Breast epithelium (tissue), 4 donors: ENCODE measurements at regions of chr12 and their contacts with region 1.

Region 1: GRCh38 chr12:121917979-121918678 is at the start of gene CFAP251:
- DNase-seq: peak; percentile 92 to 95
- H3K4me3 ChIP-seq: peak within 1 kb of the TSS; percentile 23 to 67 (median 57)
- H3K27ac ChIP-seq: peak within 1 kb of the TSS; percentile 45 to 64
- H3K4me1 ChIP-seq: peaks cover 0 to 5% of the 10 kb centered on the region in 2 donors
- H3K27me3 ChIP-seq: no peaks in the 10 kb centered on the region
- CTCF ChIP-seq: peak; percentile 58 to 94 (median 66)
- POLR2A ChIP-seq: no peak
- total RNA-seq, gene CFAP251: 4.8 to 8.2 (median 6.7) TPM

Region 2: DNA sequence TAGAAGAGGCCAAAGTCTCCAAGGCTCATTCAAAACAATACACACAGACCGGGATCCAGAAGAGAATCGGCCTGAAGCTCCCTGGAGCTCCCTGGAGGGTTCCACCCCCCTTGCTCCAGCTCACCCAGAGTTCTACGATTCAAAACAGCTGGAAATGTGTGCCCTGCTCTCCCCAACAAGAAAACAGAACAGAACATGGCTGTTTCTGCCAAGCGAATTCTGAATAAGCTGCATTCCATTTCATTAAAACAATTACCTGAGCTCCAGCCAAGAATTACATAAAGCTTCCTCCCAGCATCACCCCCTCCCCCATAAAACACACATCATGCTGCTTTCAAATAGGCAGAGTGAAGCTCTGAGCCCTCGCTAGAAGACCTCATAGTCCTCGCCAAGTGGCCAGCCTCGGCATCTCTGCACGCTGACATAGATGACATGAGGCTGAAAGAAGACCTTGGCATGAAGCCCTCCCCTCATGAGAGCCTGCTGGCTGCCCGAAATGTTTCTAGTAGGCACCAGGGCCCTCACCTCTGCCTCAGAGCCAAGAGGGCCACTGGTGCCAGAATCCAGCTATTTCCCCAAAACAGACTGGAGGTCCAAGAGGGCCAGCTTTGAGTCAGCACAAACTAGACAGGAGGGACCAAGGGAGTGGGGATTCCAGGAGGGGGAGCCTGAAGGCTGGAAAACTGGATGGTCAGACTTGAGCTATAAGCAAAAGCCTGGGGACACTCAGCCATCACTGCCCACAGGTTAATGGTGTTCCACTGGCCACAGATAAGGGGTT is 1660.9 kb before region 1 on chr12:
- intact Hi-C with region 1: loop called (anchors 10 kb)
- DNase-seq: peak in 1 of 2 donors; percentile 80
- H3K4me3 ChIP-seq: peak overlapping the region in 2 of 3 donors; percentile 4 to 52
- H3K27ac ChIP-seq: peak overlapping the region; percentile 94 to 96
- H3K4me1 ChIP-seq: peaks cover 8 to 19% of the 10 kb centered on the region in 2 donors
- H3K27me3 ChIP-seq: no peaks in the 10 kb centered on the region
- CTCF ChIP-seq: peak in 1 of 3 donors; percentile 15
- POLR2A ChIP-seq: no peak

Region 3: DNA sequence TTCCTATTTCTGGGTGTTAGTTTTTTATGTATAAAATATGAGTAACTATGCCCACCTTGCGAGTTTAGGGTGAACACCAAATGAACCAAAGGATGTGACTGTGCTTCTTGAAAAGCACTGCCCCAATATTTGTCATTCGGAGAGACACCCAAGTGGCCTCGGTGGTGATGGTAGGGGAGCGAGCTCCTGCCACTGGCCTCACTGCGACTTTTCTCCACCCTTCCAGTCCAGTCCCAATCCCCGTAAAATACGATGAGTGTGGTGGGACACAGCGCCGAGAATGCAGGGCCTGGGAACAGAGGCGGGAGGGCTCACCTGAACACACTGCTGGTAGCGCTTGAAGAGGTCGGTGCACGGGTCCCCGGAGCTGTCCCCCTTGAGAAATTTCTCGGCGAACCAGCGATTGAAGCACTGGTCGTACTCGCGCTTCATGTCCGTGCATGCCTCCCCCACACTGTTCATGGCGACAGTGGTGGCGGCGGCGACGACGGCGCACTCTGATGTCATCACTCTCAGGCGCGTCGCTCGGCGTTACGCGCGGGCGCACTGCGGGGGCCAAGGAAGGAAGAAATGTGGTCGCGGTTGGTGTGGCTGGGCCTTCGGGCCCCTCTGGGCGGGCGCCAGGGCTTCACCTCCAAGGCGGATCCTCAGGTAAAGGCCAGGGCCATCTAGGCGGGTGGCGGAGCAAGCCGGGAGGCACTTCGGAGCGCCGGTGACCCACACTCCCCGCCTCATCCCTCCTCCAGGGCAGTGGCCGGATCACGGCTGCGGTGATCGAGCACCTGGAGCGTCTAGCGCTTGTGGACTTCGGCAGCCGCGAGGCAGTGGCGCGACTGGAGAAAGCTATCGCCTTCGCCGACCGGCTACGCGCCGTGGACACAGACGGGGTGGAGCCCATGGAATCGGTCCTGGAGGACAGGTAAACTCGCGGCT is 1472.0 kb before region 1 on chr12 and contains the starts of genes GATC and TRIAP1:
- intact Hi-C with region 1: loop called (anchors 5 kb)
- DNase-seq: peak; percentile 74 to 83
- H3K4me3 ChIP-seq: peak within 1 kb of the TSS; percentile 90 to 99 (median 97)
- H3K27ac ChIP-seq: peak within 1 kb of the TSS; percentile 93 to 97
- H3K4me1 ChIP-seq: peaks cover 0 to 15% of the 10 kb centered on the region in 2 donors
- H3K27me3 ChIP-seq: no peaks in the 10 kb centered on the region
- CTCF ChIP-seq: no peak
- POLR2A ChIP-seq: peak; percentile 73
- total RNA-seq, gene GATC: 26.5 to 35.8 (median 32.5) TPM
- total RNA-seq, gene TRIAP1: 10.2 to 21.3 (median 13.0) TPM

Region 4: DNA sequence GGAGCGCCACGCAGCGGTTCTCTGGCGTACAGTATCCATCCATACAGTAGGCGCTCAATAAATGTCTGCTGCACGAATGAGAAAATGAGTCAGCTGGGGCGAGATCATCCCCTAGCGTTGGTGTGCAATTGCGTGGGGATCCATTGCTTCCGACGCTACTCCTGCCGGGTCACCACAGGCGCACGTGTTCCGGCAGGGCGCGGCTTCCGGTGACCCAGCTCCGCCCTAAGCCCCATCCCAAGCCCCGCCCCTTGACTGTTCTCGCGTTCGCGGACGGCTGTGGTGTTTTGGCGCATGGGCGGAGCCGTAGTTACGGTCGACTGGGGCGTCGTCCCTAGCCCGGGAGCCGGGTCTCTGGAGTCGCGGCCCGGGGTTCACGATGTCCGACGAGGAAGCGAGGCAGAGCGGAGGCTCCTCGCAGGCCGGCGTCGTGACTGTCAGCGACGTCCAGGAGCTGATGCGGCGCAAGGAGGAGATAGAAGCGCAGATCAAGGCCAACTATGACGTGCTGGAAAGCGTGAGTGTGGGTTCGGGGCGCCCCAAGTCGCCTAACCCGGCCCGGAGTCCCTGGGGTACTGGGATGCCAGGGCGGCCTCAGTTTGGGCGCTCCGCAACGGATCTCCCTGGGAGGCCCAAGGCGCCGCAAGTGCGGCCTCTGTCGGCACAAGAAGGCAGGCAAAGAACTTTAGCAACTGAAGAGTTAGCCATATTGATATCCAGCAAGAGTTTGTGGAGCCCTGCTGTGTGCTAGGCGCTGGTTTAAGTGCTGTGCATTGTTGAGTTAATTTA is 29.5 kb before region 1 on chr12 and contains the start of gene PSMD9:
- intact Hi-C with region 1: no loop called
- DNase-seq: peak; percentile 95 to 98
- H3K4me3 ChIP-seq: peak within 1 kb of the TSS; percentile 69 to 90 (median 86)
- H3K27ac ChIP-seq: peak within 1 kb of the TSS; percentile 88 to 94
- H3K4me1 ChIP-seq: peaks cover 0 to 13% of the 10 kb centered on the region in 2 donors
- H3K27me3 ChIP-seq: no peaks in the 10 kb centered on the region
- CTCF ChIP-seq: peak; percentile 22 to 62 (median 59)
- POLR2A ChIP-seq: peak; percentile 25
- total RNA-seq, gene PSMD9: 34.7 to 65.3 (median 37.9) TPM

Region 5: GRCh38 chr12:122421821-122422729 is 503.9 kb after region 1 on chr12 and contains the start of gene CLIP1:
- intact Hi-C with region 1: no loop called
- DNase-seq: peak; percentile 54 to 57
- H3K4me3 ChIP-seq: peak within 1 kb of the TSS; percentile 92 to 98 (median 98)
- H3K27ac ChIP-seq: peak within 1 kb of the TSS; percentile 100
- H3K4me1 ChIP-seq: peaks cover 0 to 12% of the 10 kb centered on the region in 2 donors
- H3K27me3 ChIP-seq: no peaks in the 10 kb centered on the region
- CTCF ChIP-seq: no peak
- POLR2A ChIP-seq: no peak
- total RNA-seq, gene CLIP1: 86.9 to 126 (median 108) TPM

Region 6: DNA sequence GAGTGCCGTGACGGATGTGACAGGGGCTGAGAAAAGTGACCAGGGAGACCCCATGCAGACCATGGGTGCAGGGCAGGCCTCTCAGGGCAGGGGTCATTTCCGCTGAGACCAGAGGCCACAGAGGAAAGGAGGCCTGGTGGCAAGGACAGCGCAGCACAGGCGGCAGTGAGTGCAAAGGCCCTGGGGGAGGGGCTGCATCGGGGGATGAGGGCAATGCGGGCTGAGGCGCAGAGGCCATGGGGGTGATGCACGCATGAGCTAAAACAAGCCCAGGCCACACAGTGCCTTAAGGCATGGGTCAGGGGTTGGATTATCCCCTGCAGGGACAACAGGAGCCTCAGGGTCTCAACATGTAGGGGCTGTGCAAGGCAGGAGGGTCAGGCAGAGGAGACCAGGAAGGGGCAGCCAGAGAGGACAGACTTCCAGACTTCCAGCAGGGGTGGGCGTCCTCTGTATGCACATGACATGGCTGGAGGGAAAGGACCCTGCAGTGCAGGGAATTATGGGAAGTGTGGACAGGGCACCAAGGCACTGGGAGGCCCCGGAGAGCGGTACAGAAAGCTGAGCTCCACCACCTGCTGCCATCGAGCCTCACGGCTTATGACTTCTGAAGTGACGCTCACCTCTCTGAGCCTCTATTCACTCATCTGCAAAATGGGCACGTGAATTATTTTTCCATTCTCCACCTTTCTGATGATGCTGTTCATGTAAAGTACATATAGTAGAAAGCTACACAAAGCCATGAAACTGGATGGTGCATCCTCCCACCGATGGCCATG is 1588.1 kb after region 1 on chr12:
- intact Hi-C with region 1: loop called (anchors 5 kb)
- DNase-seq: no peak
- H3K4me3 ChIP-seq: no peak overlapping the region
- H3K27ac ChIP-seq: no peak overlapping the region
- H3K4me1 ChIP-seq: no peaks in the 10 kb centered on the region
- H3K27me3 ChIP-seq: no peaks in the 10 kb centered on the region
- CTCF ChIP-seq: no peak
- POLR2A ChIP-seq: no peak